ENCODE measurements at regions of chr16 and their contacts with region 1.

Region 1: DNA sequence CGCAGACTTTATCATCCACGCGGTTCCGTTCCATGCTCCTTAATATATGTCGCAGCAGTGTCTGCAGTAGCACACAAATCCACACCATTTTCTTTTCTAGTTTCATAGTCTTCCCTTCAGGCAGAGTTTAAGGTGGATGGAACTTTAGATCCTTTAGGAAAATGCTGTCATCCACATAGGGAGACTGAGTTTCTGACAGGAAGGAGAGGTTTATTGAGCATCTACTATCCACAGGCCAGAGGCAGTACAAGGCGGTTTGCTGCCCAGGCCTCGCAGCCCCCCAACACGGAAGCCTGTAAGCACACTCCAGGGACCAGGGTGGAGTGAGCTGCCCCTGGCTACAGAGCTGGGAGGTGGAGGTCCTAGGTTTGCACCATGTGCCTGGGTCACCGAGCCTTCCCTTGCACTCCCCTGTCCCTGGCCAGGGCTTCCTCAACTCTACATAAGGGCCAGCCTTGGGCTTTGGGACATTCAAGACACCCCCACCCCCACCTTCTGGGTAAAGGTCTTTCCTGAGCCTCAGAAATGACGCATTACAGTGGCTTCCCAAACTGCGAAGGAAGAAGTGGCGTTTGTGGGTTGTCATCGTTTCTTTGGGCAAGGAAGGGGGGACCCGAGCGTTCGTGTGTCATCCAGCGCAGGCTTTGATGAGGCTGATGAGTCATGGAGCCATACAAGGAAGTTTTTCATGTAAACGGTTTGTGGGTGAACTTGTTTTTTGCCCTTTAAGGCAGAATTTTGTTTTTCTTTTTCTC is 146.5 kb upstream of the PLCG2 start:
- DNase-seq: peak in 1 of 10 donors; percentile 83

Region 2: DNA sequence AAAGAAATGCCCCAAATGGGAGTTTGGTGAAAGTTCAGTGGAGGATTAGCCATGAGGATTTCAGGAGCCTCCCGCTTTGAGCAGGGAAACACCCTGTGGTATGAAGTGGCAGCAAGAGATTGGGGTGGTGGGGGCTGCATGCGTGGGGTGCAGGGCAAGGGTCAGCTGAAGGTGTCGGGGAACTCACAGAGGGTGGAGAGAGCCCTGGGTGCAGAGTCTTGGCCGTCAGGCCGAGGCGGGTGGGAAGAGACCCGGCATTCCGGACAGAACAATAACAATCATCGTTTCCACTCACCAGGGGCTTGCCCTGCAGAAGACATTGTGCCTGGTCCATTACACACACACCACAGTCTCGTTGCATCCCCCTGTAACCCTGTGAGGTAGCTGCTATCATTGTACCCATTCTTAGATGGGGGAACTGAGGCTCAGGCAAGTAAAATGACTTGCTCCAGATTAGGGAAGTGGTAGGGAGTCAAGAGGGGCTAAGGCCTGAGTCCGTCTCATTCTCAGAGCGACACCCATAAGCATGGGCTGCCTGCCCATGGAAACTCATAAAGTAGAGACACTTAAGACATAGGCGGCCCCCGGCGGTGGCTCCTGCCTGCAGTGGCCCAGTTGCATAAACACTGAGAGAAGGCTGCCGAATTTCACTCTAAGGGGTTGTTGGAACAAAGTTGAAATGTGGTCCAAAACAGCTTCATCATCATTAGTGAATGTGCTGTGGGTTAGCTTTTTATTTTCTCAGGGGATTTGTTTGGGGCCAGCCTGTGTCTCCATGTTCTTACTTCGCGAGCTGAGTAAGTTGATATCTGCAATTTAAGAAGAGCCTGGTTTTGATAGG is 94.6 kb before region 1 on chr16:
- intact Hi-C with region 1: loop called (anchors 10 kb)
- DNase-seq: peak in 1 of 10 donors; percentile 46

Region 3: GRCh38 chr16:81680444-81681275 is 48.1 kb after region 1 on chr16:
- intact Hi-C with region 1: no loop called
- DNase-seq: peak in 2 of 10 donors; percentile 55 to 71